Head of caudate nucleus (tissue), 42 donors: ENCODE measurements at regions of chr16 and their contacts with region 1.

Region 1: GRCh38 chr16:12455287-12455798 is 348.3 kb downstream of the CPPED1 start:
- DNase-seq: peak; percentile 31 to 89 (median 77)

Region 2: DNA sequence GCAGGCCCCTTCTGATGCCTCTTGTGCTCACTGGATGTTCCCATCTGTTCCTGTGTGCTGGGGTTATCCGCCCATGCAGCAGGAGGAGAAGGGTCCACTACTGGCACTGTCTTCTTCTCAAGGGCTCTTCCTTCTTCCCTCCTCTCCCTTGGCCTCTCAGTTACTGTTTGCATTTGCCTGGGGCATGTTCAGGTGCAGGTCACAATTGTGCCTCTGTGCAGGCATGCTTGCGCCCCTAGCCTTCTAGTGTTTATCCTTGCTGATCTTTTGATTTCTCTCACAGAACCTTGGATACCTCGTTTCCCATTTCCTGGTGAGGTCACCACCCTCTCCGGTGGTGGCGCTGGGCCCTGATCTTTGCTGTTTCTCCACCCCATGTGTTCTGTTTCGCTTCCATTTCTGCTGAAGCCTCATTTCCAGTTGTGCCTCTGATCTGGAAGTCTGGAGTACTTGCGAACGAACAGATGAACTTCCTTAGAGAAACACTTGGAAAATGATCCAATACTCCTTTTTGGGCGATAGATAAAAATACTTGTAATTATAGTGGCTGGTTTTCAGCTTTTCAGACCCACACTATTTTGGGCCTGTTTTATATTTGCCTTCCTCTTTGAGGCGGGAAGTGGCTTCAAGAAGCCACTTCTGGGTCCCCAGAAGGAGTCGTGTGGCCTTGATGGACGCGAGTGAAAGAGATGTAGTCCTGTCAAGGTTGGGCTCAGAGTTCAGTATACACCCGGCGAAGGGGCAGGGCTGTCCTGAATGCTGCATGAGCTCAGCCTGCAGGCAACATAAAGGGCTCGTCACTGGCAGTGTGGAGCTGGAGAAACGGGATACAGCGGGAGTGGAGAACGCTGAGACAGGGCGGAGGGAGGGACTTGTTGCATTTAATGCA is 165.9 kb before region 1 on chr16:
- intact Hi-C with region 1: no loop called
- DNase-seq: no peak

Region 3: GRCh38 chr16:12819126-12820117 is 364.1 kb after region 1 on chr16:
- intact Hi-C with region 1: loop called (anchors 5 kb)
- DNase-seq: peak in 40 of 42 donors; percentile 27 to 89 (median 67)